ENCODE measurements at regions of chr12 and their contacts with region 1.

Region 1: GRCh38 chr12:52069327-52070184 is at the start of gene ATG101:
- DNase-seq: peak; percentile 84
- H3K4me3 Mint-ChIP-seq: peak within 1 kb of the TSS; percentile 95
- H3K27ac Mint-ChIP-seq: peak within 1 kb of the TSS; percentile 98
- H3K4me1 Mint-ChIP-seq: peaks cover 43% of the 10 kb centered on the region
- H3K27me3 Mint-ChIP-seq: peaks cover 1% of the 10 kb centered on the region
- total RNA-seq, gene ATG101: 44.6 and 45.9 TPM in 2 replicates

Region 2: DNA sequence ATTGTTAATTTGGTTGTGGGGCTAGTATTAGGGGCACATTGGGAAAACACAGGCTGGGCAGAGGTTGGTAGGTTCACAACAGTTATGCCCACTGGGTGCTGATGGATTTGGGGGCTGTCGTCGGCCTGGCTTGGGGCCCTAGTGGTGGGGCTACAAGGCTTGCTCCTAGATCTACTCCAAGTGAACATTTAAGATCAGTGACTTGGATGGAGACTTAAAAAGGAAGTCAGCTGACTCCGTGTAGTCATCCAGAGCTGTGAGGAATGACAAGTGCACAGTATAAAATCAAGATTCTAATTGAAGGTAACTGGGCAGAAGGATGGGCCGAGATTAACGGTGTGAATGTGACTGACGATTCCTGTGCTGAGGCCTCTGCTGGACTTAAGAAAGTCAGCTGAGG is 31.1 kb before region 1 on chr12:
- intact Hi-C with region 1: loop called (anchors 1 kb)
- DNase-seq: no peak
- H3K4me3 Mint-ChIP-seq: peak overlapping the region; percentile 88
- H3K27ac Mint-ChIP-seq: peak overlapping the region; percentile 76
- H3K4me1 Mint-ChIP-seq: peaks cover 61% of the 10 kb centered on the region
- H3K27me3 Mint-ChIP-seq: peaks cover 6% of the 10 kb centered on the region

Region 3: GRCh38 chr12:52050761-52051541 is 18.6 kb before region 1 on chr12 and contains the start of gene NR4A1:
- intact Hi-C with region 1: loop called (anchors 1 kb)
- DNase-seq: peak; percentile 94
- H3K4me3 Mint-ChIP-seq: peak within 1 kb of the TSS; percentile 98
- H3K27ac Mint-ChIP-seq: peak within 1 kb of the TSS; percentile 92
- H3K4me1 Mint-ChIP-seq: peaks cover 25% of the 10 kb centered on the region
- H3K27me3 Mint-ChIP-seq: no peaks in the 10 kb centered on the region
- total RNA-seq, gene NR4A1: 134 and 139 TPM in 2 replicates

Region 4: GRCh38 chr12:52121824-52122539 is 52.4 kb after region 1 on chr12:
- intact Hi-C with region 1: no loop called
- DNase-seq: peak; percentile 42
- H3K4me3 Mint-ChIP-seq: no peak overlapping the region
- H3K27ac Mint-ChIP-seq: no peak overlapping the region
- H3K4me1 Mint-ChIP-seq: peaks cover 14% of the 10 kb centered on the region
- H3K27me3 Mint-ChIP-seq: peaks cover 13% of the 10 kb centered on the region

Measured in activated T-helper 2 cell treated with anti-CD3 and anti-CD28 coated beads, Interferon-gamma antibody, Interleukin-2, Interleukin-4, amounts not matched to agents 10 μg/mL and 5 μg/mL and 100 μg/mL, durations not matched to agents 14 hours and 24 hours and 36 hours (primary cell).